ENCODE measurements at regions of chr19 and their contacts with region 1.

Region 1: GRCh38 chr19:35648017-35648961 is at the start of gene COX6B1:
- DNase-seq: peak; percentile 85 to 98
- H3K4me3 ChIP-seq: peak within 1 kb of the TSS; percentile 77 to 88
- H3K27ac ChIP-seq: peak within 1 kb of the TSS; percentile 76 to 83
- H3K4me1 ChIP-seq: peaks cover 0 to 25% of the 10 kb centered on the region in 2 donors
- H3K27me3 ChIP-seq: no peaks in the 10 kb centered on the region
- CTCF ChIP-seq: no peak
- total RNA-seq, gene COX6B1: 301 TPM

Region 2: GRCh38 chr19:35269421-35270117 is 378.7 kb before region 1 on chr19:
- intact Hi-C with region 1: loop called (anchors 5 kb)
- DNase-seq: peak in 1 of 2 donors; percentile 87
- H3K4me3 ChIP-seq: peak overlapping the region; percentile 86 to 98
- H3K27ac ChIP-seq: peak overlapping the region; percentile 79 to 97
- H3K4me1 ChIP-seq: peaks cover 7 to 12% of the 10 kb centered on the region in 2 donors
- H3K27me3 ChIP-seq: no peaks in the 10 kb centered on the region
- CTCF ChIP-seq: peak; percentile 38 to 59 (median 53)

Region 3: DNA sequence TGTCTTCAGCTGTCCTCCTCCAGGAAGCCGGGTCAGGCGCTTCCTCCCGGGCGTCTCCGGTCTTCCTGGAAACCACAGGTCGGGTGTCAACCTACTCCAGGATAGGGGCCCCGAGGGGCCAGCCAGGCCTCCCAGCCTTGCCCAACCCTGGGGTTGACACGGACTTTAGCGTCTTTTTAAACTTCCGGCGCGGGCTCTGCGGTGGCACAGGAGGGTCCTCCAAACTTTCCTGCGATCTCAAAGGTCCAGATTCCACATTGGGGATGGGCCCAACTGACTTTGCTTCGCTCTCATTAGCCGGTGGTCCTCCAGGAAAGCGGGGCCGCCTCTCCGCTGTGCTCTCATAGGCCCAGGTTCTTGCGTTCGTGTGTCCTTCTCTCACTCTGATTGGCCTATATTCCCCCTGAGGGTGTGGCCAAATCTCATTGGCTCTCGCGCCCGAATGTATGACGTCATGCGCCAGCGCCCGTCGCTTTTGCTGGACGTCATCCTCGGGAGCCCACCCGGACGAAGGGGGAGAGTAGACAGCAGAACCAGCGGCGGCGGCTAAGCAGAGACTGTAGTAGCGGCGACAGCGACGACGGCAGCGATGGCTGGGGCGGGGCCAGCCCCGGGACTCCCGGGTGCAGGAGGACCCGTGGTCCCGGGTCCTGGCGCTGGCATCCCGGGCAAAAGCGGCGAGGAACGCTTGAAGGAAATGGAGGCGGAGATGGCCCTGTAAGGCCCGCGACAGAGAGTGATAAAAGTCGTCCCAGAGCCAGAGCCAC is 19.5 kb before region 1 on chr19 and contains the start of gene RBM42:
- intact Hi-C with region 1: loop called (anchors 1 kb)
- DNase-seq: peak; percentile 95 to 99
- H3K4me3 ChIP-seq: peak within 1 kb of the TSS; percentile 74 to 97
- H3K27ac ChIP-seq: peak within 1 kb of the TSS; percentile 73 to 91
- H3K4me1 ChIP-seq: peaks cover 5 to 10% of the 10 kb centered on the region in 2 donors
- H3K27me3 ChIP-seq: no peaks in the 10 kb centered on the region
- CTCF ChIP-seq: no peak
- total RNA-seq, gene RBM42: 69.0 TPM

Region 4: DNA sequence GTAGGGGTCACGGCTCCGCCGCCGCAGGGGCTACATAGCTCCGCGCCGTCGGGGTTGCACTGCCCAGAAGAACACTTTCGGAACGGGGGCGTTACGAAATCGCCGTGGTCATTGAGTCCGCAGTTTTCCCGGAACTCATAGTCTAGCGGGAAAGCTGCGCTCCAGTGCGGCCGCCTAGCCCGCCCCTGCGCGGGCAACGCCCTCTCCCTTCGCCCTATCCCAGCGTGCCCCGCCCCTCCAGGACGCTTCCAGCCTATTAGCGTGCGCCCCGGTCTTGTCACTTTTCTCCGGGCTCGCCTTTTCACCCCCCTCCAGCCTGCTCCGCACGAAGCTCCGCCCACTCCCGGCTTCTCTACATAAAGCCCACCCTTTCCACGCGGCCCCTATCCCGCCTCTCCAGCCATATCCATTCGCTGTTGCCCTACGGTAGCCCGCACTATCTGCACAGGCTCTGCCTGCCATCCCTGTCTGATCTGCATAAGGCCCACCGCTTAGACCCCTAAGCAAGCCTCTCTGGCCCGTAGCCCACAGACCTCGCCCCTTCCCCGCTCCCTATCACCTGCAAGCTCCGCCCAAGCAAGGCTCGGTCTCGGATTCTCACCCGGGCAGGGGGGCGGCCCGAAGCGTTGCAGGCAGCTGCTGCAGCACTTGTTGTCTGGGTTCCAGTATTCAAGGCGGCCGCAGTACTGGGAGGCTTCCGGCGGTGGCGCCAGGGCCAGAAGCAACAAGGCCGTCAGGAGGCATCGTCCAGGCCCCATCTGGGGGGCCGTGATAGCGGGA is 92.3 kb after region 1 on chr19:
- intact Hi-C with region 1: loop called (anchors 5 kb)
- DNase-seq: peak; percentile 94 to 99
- H3K4me3 ChIP-seq: peak overlapping the region; percentile 56 to 70
- H3K27ac ChIP-seq: peak overlapping the region; percentile 81 to 85
- H3K4me1 ChIP-seq: peaks cover 10 to 18% of the 10 kb centered on the region in 2 donors
- H3K27me3 ChIP-seq: no peaks in the 10 kb centered on the region
- CTCF ChIP-seq: peak; percentile 12 to 22 (median 18)

Region 5: DNA sequence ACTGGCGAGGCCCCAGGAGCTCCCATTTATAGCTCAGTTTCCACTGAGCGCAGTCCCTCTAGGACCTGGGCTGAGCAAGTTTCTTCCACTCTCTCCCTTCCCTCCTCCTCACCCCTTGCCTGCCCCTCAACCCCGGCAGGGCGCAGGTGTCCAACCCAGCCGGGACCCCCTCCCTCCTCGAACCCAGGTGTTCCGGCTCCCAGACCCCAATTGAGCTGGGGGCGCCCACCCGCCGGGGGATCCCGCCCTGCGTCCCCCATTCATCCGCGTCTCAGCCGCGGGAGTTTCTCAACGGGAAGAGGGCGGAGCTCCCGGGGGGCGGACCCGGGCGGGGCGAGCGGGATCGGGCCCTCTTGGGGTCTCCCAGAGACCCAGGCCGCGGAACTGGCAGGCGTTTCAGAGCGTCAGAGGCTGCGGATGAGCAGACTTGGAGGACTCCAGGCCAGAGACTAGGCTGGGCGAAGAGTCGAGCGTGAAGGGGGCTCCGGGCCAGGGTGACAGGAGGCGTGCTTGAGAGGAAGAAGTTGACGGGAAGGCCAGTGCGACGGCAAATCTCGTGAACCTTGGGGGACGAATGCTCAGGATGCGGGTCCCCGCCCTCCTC is 208.4 kb after region 1 on chr19 and contains the start of gene KIRREL2:
- intact Hi-C with region 1: no loop called
- DNase-seq: no peak
- H3K4me3 ChIP-seq: peak within 1 kb of the TSS; percentile 51 to 60
- H3K27ac ChIP-seq: no peak within 1 kb of the TSS
- H3K4me1 ChIP-seq: peaks cover 0 to 5% of the 10 kb centered on the region in 2 donors
- H3K27me3 ChIP-seq: peaks cover 5% of the 10 kb centered on the region
- CTCF ChIP-seq: no peak
- total RNA-seq, gene KIRREL2: not detected

Region 6: GRCh38 chr19:36014029-36014924 is 366.0 kb after region 1 on chr19 and contains the start of gene ALKBH6:
- intact Hi-C with region 1: loop called (anchors 10 kb)
- DNase-seq: peak; percentile 99 to 100
- H3K4me3 ChIP-seq: peak within 1 kb of the TSS; percentile 58 to 76
- H3K27ac ChIP-seq: peak within 1 kb of the TSS; percentile 74 to 85
- H3K4me1 ChIP-seq: peaks cover 4 to 14% of the 10 kb centered on the region in 2 donors
- H3K27me3 ChIP-seq: no peaks in the 10 kb centered on the region
- CTCF ChIP-seq: no peak
- total RNA-seq, gene ALKBH6: 35.3 TPM